ENCODE measurements at regions of chr2 and their contacts with region 1.

Region 1: GRCh38 chr2:168246483-168247340 is 683 bp downstream of the STK39 start:
- DNase-seq: peak; percentile 64 to 84 (median 79)
- ATAC-seq: peak; percentile 73
- H3K4me3 ChIP-seq: peak overlapping the region; percentile 74
- H3K4me3 Mint-ChIP-seq: peak overlapping the region; percentile 71 to 95 (median 93)
- H3K27ac ChIP-seq: peak overlapping the region; percentile 77
- H3K27ac Mint-ChIP-seq: peak overlapping the region; percentile 75 to 94 (median 93)
- H3K4me1 ChIP-seq: peaks cover 27 to 30% of the 10 kb centered on the region in 2 donors
- H3K4me1 Mint-ChIP-seq: peaks cover 16 to 49% (median 42%) of the 10 kb centered on the region in 7 donors
- H3K27me3 ChIP-seq: no peaks in the 10 kb centered on the region
- H3K27me3 Mint-ChIP-seq: peaks cover 0 to 11% (median 0%) of the 10 kb centered on the region in 5 donors

Region 2: GRCh38 chr2:166792808-166793207 is 1453.9 kb before region 1 on chr2:
- CTCF ChIA-PET with region 1: no interaction called
- POLR2A ChIA-PET with region 1: no interaction called
- intact Hi-C with region 1: no loop called
- DNase-seq: no peak
- ATAC-seq: no peak
- H3K4me3 ChIP-seq: no peak overlapping the region
- H3K4me3 Mint-ChIP-seq: no peak overlapping the region
- H3K27ac ChIP-seq: no peak overlapping the region
- H3K27ac Mint-ChIP-seq: no peak overlapping the region
- H3K4me1 ChIP-seq: no peaks in the 10 kb centered on the region
- H3K4me1 Mint-ChIP-seq: no peaks in the 10 kb centered on the region
- H3K27me3 ChIP-seq: no peaks in the 10 kb centered on the region
- H3K27me3 Mint-ChIP-seq: no peaks in the 10 kb centered on the region

Region 3: GRCh38 chr2:168174756-168175155 is 72.0 kb before region 1 on chr2:
- CTCF ChIA-PET with region 1: no interaction called
- POLR2A ChIA-PET with region 1: no interaction called
- intact Hi-C with region 1: loop called (anchors 2 kb)
- DNase-seq: peak in 2 of 9 donors; percentile 25
- ATAC-seq: peak; percentile 90
- H3K4me3 ChIP-seq: no peak overlapping the region
- H3K4me3 Mint-ChIP-seq: peak overlapping the region in 8 of 10 donors; percentile 4 to 65 (median 26)
- H3K27ac ChIP-seq: no peak overlapping the region
- H3K27ac Mint-ChIP-seq: peak overlapping the region in 7 of 9 donors; percentile 10 to 88 (median 16)
- H3K4me1 ChIP-seq: peaks cover 13 to 27% of the 10 kb centered on the region in 2 donors
- H3K4me1 Mint-ChIP-seq: peaks cover 38 to 67% (median 55%) of the 10 kb centered on the region in 7 donors
- H3K27me3 ChIP-seq: no peaks in the 10 kb centered on the region
- H3K27me3 Mint-ChIP-seq: no peaks in the 10 kb centered on the region

Region 4: GRCh38 chr2:168231609-168232241 is 15.0 kb before region 1 on chr2:
- CTCF ChIA-PET with region 1: interaction called, 3 read pairs
- POLR2A ChIA-PET with region 1: no interaction called
- intact Hi-C with region 1: loop called in 1 of 2 experiments (anchors 1 kb)
- DNase-seq: no peak
- ATAC-seq: no peak
- H3K4me3 ChIP-seq: no peak overlapping the region
- H3K4me3 Mint-ChIP-seq: no peak overlapping the region
- H3K27ac ChIP-seq: no peak overlapping the region
- H3K27ac Mint-ChIP-seq: peak overlapping the region in 1 of 9 donors; percentile 48
- H3K4me1 ChIP-seq: peaks cover 0 to 14% of the 10 kb centered on the region in 2 donors
- H3K4me1 Mint-ChIP-seq: peaks cover 15 to 35% (median 28%) of the 10 kb centered on the region in 7 donors
- H3K27me3 ChIP-seq: no peaks in the 10 kb centered on the region
- H3K27me3 Mint-ChIP-seq: no peaks in the 10 kb centered on the region

Region 5: DNA sequence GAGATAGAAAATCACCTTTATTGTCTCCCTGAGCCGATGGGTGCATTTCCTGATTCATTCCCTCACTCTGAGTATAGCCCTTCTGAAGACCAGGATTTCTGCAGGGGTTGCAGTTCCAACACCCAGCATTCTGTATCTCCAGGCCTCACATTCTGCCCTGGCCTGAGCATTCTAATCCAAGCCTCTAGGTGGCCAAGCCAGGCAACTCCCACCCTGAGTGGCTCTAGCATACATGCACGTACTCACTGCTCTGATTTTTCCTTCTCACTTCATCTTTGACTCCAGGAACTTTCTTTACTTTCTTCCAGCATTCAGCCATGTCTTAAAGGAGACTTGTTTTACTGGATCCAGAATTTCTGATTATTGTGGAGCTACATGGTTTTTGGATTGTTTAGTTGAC is 101.4 kb after region 1 on chr2:
- CTCF ChIA-PET with region 1: no interaction called
- POLR2A ChIA-PET with region 1: no interaction called
- intact Hi-C with region 1: no loop called
- DNase-seq: no peak
- ATAC-seq: no peak
- H3K4me3 ChIP-seq: no peak overlapping the region
- H3K4me3 Mint-ChIP-seq: no peak overlapping the region
- H3K27ac ChIP-seq: no peak overlapping the region
- H3K27ac Mint-ChIP-seq: no peak overlapping the region
- H3K4me1 ChIP-seq: no peaks in the 10 kb centered on the region
- H3K4me1 Mint-ChIP-seq: peaks cover 4 to 9% (median 8%) of the 10 kb centered on the region in 7 donors
- H3K27me3 ChIP-seq: no peaks in the 10 kb centered on the region
- H3K27me3 Mint-ChIP-seq: peaks cover 0 to 41% (median 0%) of the 10 kb centered on the region in 5 donors

Region 6: DNA sequence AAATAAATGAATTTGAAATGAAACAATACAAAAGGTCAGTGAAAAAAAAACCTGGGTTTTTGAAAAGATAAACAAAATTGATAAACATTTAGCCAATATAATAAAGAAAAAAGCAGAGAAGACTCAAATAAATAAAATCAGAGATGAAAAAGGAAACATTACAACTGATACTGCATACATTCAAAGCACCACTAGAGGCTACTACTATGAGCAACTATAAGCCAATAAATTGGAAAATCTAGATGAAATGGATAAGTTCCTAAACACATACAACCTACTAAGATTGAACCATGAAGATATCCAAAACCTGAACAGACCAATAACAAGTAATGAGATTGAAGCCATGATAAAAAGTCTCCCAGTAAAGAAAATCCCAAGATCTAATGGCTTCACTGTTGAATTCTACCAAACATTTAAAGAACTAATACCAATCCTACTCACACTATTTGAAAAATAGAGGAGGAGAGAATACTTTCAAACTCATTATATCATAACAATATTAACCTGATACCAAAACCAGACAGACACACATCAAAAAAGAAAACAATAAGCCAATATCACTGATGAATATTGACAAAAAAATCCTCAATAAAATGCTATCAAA is 128.6 kb after region 1 on chr2:
- CTCF ChIA-PET with region 1: no interaction called
- POLR2A ChIA-PET with region 1: no interaction called
- intact Hi-C with region 1: no loop called
- DNase-seq: peak in 3 of 9 donors; percentile 9 to 20 (median 10)
- ATAC-seq: no peak
- H3K4me3 ChIP-seq: no peak overlapping the region
- H3K4me3 Mint-ChIP-seq: no peak overlapping the region
- H3K27ac ChIP-seq: no peak overlapping the region
- H3K27ac Mint-ChIP-seq: no peak overlapping the region
- H3K4me1 ChIP-seq: peaks cover 10 to 12% of the 10 kb centered on the region in 2 donors
- H3K4me1 Mint-ChIP-seq: peaks cover 7 to 45% (median 19%) of the 10 kb centered on the region in 7 donors
- H3K27me3 ChIP-seq: no peaks in the 10 kb centered on the region
- H3K27me3 Mint-ChIP-seq: peaks cover 0 to 3% (median 0%) of the 10 kb centered on the region in 5 donors

Region 7: DNA sequence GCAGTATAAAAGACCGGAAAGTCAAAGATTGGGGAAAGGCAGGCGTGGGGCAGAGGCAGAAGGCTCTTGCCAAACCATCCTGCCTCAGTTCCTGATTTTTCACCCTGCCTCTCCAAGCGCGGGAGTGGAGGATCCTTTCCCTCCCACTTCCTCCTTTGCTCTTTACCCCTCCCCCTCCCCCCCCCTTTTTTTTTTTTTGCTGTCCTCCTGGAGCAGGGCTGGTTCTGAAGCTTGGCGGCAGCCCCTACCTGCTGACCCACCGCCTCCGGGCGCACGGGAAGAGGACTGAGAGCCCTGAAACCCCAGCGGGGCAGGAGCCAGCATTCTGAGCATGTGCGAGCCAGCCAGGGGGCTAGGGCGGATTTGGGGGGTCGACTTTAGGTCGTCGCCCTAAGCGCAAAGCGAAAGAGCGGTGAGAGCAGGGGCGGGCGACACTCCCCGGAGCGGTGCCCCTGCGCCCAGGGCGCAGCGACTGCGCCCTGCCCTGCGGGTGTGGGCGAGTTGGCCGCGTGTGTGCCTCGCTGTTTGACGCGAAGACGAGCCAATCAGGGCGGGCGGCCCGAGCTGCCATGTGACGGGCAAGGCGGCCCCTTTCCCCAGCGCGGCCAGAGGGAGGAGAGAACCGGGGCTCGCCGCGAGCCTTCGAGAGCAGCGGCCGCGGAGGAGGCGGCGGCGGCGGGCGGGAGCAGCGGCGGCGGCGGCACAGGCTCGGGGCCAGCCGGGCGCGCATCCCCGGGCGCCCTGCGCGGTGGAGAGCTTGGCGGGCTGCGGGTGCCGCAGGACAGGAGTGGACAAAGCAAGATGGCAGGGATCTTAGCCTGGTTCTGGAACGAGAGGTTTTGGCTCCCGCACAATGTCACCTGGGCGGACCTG is 209.2 kb after region 1 on chr2 and contains the start of gene CERS6:
- CTCF ChIA-PET with region 1: no interaction called
- POLR2A ChIA-PET with region 1: no interaction called
- intact Hi-C with region 1: loop called (anchors 1 to 10 kb)
- DNase-seq: peak; percentile 47 to 88 (median 62)
- ATAC-seq: peak; percentile 92
- H3K4me3 ChIP-seq: peak within 1 kb of the TSS; percentile 59
- H3K4me3 Mint-ChIP-seq: peak within 1 kb of the TSS in 2 of 10 donors; percentile 87 to 99
- H3K27ac ChIP-seq: peak within 1 kb of the TSS; percentile 63
- H3K27ac Mint-ChIP-seq: peak within 1 kb of the TSS in 8 of 9 donors; percentile 63 to 81 (median 70)
- H3K4me1 ChIP-seq: peaks cover 0 to 24% of the 10 kb centered on the region in 2 donors
- H3K4me1 Mint-ChIP-seq: peaks cover 16 to 41% (median 34%) of the 10 kb centered on the region in 7 donors
- H3K27me3 ChIP-seq: no peaks in the 10 kb centered on the region
- H3K27me3 Mint-ChIP-seq: no peaks in the 10 kb centered on the region
- total RNA-seq, gene CERS6: 17.3 to 28.4 (median 20.9) TPM

Region 8: DNA sequence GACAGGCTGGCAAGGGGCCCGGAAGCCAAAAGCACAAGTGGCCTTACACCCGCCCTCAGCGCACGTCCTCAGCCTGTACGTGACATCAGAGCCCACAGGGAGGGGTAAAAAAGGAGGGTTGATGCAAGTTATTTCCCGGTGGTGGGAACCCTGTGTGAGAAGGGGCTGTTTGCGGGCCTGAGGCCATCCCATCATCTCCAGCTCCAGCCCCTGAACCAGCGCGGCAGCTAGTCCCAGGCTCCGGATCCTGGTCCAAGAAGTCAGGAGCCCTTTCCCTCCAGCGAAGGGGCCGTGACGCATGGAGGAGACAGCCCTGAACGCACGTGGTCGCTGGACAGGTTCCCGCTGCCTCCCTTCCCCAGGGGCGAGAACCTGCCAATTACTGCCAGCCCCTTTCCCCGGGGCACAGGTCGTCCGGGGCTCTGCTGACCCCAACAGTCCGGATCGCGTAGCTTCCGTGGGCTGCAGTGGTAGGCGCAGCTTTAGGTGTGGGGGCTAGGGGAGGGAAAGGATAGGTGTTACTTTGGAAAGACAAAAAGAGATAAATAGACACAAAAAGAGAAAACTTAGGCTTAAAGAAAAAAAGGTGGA is 1116.9 kb after region 1 on chr2:
- CTCF ChIA-PET with region 1: no interaction called
- POLR2A ChIA-PET with region 1: no interaction called
- intact Hi-C with region 1: loop called in 1 of 2 experiments (anchors 10 kb)
- DNase-seq: peak in 8 of 9 donors; percentile 14 to 49 (median 38)
- ATAC-seq: peak; percentile 58
- H3K4me3 ChIP-seq: peak overlapping the region; percentile 89
- H3K4me3 Mint-ChIP-seq: peak overlapping the region; percentile 87 to 98 (median 94)
- H3K27ac ChIP-seq: no peak overlapping the region
- H3K27ac Mint-ChIP-seq: peak overlapping the region in 4 of 9 donors; percentile 14 to 88 (median 55)
- H3K4me1 ChIP-seq: peaks cover 11 to 18% of the 10 kb centered on the region in 2 donors
- H3K4me1 Mint-ChIP-seq: peaks cover 17 to 37% (median 29%) of the 10 kb centered on the region in 7 donors
- H3K27me3 ChIP-seq: peaks cover 4 to 15% of the 10 kb centered on the region in 2 donors
- H3K27me3 Mint-ChIP-seq: peaks cover 42 to 60% (median 49%) of the 10 kb centered on the region in 5 donors

Region 9: DNA sequence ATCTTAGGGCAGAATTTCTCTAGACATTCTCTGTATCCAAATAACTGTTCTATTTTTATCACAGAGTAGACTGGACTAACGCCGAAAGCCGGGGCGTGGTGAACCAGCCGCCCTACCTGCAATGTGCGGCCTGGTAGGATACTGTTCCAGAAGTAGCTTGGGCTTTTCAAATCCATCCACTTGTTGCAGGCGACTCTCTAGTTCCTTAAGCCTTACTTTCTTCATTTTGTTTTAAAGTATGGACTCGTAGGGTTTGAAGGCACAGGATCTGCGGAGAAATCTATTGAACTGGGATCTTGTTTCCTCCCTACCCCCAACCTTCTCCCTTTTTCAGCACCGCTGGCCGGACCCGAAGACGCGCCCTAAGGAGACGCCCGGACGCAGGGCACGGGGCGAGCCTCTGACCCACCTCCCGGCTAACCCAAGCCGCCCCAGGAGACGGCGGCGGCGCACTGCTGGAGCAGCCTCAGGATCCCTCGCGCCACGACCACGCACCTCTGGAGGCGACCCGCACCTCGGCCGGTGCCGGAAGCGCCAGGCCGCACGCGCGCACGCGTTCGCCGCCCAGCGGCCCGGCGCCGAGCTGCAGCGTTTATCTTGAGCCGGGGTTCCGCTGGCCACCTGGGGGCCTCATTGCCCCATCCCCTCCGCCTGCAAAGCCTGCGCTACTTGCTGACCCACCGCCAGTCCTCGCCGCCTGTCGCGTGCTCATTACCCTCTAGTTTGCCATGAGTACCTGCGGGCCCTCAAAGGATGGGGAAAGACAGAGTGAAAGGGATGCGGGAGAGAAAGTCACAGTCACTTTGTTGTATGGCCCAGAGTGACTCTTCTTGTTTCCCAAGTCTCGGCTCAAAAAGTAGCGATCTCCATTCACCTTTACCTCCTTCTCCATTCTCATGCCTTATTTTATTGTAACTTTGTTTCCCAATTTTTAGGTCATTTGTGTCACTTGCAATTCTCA is 1577.9 kb after region 1 on chr2 and contains the start of gene METTL5:
- CTCF ChIA-PET with region 1: no interaction called
- POLR2A ChIA-PET with region 1: no interaction called
- intact Hi-C with region 1: loop called in 1 of 2 experiments (anchors 10 kb)
- DNase-seq: peak; percentile 55 to 90 (median 71)
- ATAC-seq: peak; percentile 80
- H3K4me3 ChIP-seq: peak within 1 kb of the TSS; percentile 80
- H3K4me3 Mint-ChIP-seq: peak within 1 kb of the TSS; percentile 82 to 99 (median 91)
- H3K27ac ChIP-seq: peak within 1 kb of the TSS; percentile 85
- H3K27ac Mint-ChIP-seq: peak within 1 kb of the TSS; percentile 84 to 96 (median 89)
- H3K4me1 ChIP-seq: peaks cover 19 to 28% of the 10 kb centered on the region in 2 donors
- H3K4me1 Mint-ChIP-seq: peaks cover 46 to 75% (median 65%) of the 10 kb centered on the region in 7 donors
- H3K27me3 ChIP-seq: no peaks in the 10 kb centered on the region
- H3K27me3 Mint-ChIP-seq: no peaks in the 10 kb centered on the region
- total RNA-seq, gene METTL5: 21.1 to 52.9 (median 44.2) TPM